ENCODE measurements at regions of chr10 and their contacts with region 1.

Region 1: DNA sequence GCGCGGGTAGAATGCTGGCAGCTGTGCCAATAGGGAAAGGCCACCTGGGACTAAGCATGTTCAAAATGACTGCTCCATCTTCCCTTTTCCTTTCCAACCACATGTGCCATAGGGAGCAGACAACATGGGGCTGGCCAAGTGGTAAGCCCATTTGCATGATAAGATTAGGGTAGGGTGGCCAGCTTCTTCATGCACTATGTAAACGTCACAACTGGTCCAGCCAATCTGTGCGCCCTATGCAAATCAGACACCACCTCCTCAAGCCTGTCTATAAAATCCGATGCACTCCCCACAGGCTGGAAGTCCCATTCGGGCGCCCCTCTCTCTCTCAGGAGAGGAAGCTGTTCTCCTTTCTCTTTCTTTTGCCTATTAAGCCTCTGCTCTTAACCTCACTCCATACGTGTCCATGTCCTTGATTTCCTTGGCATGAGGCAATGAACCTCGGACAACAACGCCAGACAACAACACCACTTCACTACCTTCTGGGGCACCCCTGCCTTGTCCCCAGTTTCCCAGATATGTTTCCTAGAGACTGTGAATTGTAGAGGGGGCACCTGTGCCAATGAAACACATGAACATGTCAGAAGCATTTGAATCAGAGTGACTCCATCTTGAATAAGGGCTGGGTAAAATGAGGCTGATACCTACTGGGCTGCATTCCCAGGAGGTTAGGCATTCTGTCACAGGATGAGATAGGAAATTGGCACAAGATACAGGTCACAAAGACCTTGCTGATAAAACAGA is 19.1 kb upstream of the EXOC6 start:
- DNase-seq: no peak
- ATAC-seq: no peak
- H3K4me3 ChIP-seq: no peak overlapping the region
- H3K27ac ChIP-seq: no peak overlapping the region
- H3K4me1 ChIP-seq: peaks cover 0 to 4% of the 10 kb centered on the region in 2 donors
- H3K27me3 ChIP-seq: no peaks in the 10 kb centered on the region
- CTCF ChIP-seq: no peak

Region 2: GRCh38 chr10:92876509-92877036 is 47.4 kb after region 1 on chr10:
- intact Hi-C with region 1: loop called in 1 of 2 experiments (anchors 5 kb)
- DNase-seq: no peak
- ATAC-seq: no peak
- H3K4me3 ChIP-seq: no peak overlapping the region
- H3K27ac ChIP-seq: no peak overlapping the region
- H3K4me1 ChIP-seq: peaks cover 0 to 46% of the 10 kb centered on the region in 2 donors
- H3K27me3 ChIP-seq: no peaks in the 10 kb centered on the region
- CTCF ChIP-seq: no peak

Measured in left lung (tissue), 14 donors.